Activated T-helper 1 cell treated with anti-CD3 and anti-CD28 coated beads, Interleukin-12 subunit alpha, Interleukin-12 subunit beta, Interleukin-2, Interleukin-4 antibody, amounts not matched to agents 30 ng/mL and 10 ng/mL and 1 ng/mL, durations not matched to agents 14 hours and 24 hours and 36 hours (primary cell): ENCODE measurements at regions of chr1 and their contacts with region 1.

Region 1: DNA sequence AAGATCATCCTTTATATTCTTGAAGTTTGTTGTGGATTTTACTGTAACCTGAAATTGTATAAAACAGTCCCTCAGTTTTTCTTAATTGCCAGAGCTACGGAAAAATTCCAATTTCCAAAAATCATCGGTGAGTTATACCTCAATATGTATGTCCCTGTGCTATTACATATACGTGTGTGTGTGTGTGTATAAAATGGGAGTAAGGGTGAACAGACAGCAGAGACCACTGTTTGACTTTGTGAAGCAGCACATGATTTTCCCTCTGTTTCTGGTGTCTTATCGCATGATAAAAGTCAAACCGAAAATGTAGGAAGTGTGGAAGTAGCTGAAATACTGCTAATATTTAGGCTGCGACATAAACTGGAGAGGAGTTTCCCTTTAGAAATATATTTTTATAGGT is 1.2 kb downstream of the OR2T1 start:
- DNase-seq: no peak
- H3K4me3 Mint-ChIP-seq: no peak overlapping the region
- H3K27ac Mint-ChIP-seq: no peak overlapping the region
- H3K4me1 Mint-ChIP-seq: no peaks in the 10 kb centered on the region
- H3K27me3 Mint-ChIP-seq: peaks cover 2% of the 10 kb centered on the region

Region 2: DNA sequence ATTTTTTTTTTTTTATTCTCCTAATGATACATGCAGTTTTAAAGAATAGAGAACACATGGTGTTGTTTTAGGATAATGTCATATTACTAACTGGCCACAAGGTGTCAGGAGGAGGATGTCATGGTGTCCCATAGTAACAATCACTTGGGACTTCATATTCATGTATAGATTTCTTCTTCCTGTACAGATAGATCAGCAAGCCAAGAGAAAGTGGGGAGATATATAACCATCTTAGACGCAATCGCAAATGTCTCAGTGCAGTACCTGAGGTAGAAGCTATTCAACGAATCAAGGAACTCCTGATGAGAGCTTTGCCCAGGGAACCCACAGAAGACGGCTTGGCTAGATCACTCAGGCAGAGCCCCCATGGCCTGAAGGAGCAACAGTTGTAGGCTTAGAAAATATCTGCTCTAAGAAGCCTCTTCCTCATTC is 218.6 kb after region 1 on chr1:
- intact Hi-C with region 1: loop called (anchors 10 kb)
- DNase-seq: no peak
- H3K4me3 Mint-ChIP-seq: no peak overlapping the region
- H3K27ac Mint-ChIP-seq: no peak overlapping the region
- H3K4me1 Mint-ChIP-seq: peaks cover 9% of the 10 kb centered on the region
- H3K27me3 Mint-ChIP-seq: no peaks in the 10 kb centered on the region